ENCODE measurements at regions of chr4 and their contacts with region 1.

Region 1: GRCh38 chr4:67087897-67088296 is 457.4 kb downstream of the CENPC start:
- DNase-seq: peak; percentile 11 to 57 (median 36)
- ATAC-seq: peak; percentile 50; the same call in 2 of the 3 replicates
- H3K4me3 ChIP-seq: no peak overlapping the region
- H3K27ac ChIP-seq: no peak overlapping the region
- H3K4me1 ChIP-seq: no peaks in the 10 kb centered on the region
- H3K27me3 ChIP-seq: no peaks in the 10 kb centered on the region
- CTCF ChIP-seq: peak; percentile 34 to 57 (median 56); a peak in 5 of 6 replicates
- EP300 ChIP-seq: no peak
- POLR2A ChIP-seq: no peak
- RAD21 ChIP-seq: peak; percentile 67

Region 2: DNA sequence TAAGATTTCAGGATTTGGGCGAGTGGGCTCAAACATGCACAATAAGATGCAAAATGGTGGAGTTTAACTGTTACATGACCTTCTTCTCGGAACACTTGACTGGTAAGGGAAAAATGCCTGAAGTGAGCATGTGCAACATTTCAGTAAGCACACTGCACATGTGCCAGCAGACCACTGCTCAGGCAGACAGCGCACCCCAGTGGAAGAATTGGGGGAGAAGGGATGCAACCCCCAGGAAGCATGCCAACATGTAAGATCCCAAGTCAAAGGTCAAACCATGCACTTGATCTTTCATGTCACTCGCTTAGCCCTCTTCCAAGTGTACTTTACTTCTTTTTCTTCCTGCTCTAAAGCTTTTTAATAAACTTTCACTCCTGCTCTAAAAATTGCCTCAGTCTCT is 201.1 kb after region 1 on chr4:
- CTCF ChIA-PET with region 1: no interaction called
- POLR2A ChIA-PET with region 1: no interaction called
- in situ Hi-C with region 1: no loop called
- intact Hi-C with region 1: loop called (anchors 5 kb)
- DNase-seq: peak; percentile 21 to 54 (median 24)
- ATAC-seq: peak; percentile 89
- H3K4me3 ChIP-seq: no peak overlapping the region
- H3K27ac ChIP-seq: no peak overlapping the region
- H3K4me1 ChIP-seq: no peaks in the 10 kb centered on the region
- H3K27me3 ChIP-seq: no peaks in the 10 kb centered on the region
- CTCF ChIP-seq: peak; percentile 54 to 58 (median 56)
- EP300 ChIP-seq: no peak
- POLR2A ChIP-seq: no peak
- RAD21 ChIP-seq: peak in 1 of 2 experiments; percentile 50; a peak in 2 of 4 replicates

Region 3: GRCh38 chr4:67393699-67394281 is 305.9 kb after region 1 on chr4:
- CTCF ChIA-PET with region 1: no interaction called
- POLR2A ChIA-PET with region 1: no interaction called
- in situ Hi-C with region 1: no loop called
- intact Hi-C with region 1: loop called (anchors 5 kb)
- DNase-seq: peak; percentile 23 to 64 (median 33)
- ATAC-seq: 0 out of 3 replicates have a peak, but pooled peaks have one; percentile 46
- H3K4me3 ChIP-seq: no peak overlapping the region
- H3K27ac ChIP-seq: no peak overlapping the region
- H3K4me1 ChIP-seq: no peaks in the 10 kb centered on the region
- H3K27me3 ChIP-seq: no peaks in the 10 kb centered on the region
- CTCF ChIP-seq: peak; percentile 33 to 59 (median 40); a peak in 4 of 6 replicates
- EP300 ChIP-seq: no peak
- POLR2A ChIP-seq: no peak
- RAD21 ChIP-seq: peak; percentile 44 to 57; a peak in 3 of 4 replicates

Measured in K562 (cell line).